ENCODE measurements at regions of chr6 and their contacts with region 1.

Region 1: DNA sequence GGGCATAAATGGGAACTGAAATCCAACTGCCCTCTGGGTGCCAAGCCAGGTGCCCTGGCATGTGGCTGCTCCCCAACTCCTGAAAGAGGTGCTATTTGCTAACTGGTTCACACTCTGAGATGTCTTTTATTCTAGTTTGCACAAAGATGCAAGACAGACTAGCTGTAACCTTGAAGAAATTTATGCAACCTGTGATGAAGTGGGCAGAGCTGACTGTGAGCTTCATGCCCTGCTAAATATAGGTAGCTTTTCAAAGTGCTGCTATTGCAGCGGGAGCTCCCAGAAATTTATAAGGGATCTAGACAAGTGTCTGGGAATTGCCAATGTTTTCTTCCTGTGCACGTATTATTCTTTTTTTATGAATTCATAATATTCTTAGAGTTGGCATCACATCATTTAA is 517.5 kb downstream of the RNF144B start:
- DNase-seq: no peak
- ATAC-seq: no peak

Region 2: GRCh38 chr6:17932330-17932852 is 972.3 kb before region 1 on chr6:
- intact Hi-C with region 1: no loop called
- DNase-seq: no peak
- ATAC-seq: peak; percentile 75

Region 3: DNA sequence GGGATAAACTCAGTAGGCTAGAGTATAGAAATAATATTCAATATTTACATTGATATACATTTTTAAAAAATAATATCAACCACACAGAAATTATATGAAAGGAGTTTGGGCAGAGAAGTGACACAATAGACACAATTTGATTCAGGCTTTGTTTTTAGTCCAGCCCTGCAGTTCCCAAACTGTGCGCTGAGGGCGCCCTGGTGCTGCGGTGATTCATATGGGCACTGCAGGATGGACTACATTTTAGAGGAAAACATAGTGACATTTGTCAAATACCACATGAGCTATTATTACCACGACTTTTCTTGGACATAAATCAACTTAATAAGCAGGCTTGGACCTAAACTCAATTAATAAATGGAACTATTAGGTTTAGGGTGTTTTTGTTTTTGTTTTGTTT is 568.2 kb after region 1 on chr6:
- intact Hi-C with region 1: no loop called
- DNase-seq: no peak
- ATAC-seq: no peak

Region 4: GRCh38 chr6:19968201-19968600 is 1063.5 kb after region 1 on chr6:
- intact Hi-C with region 1: loop called (anchors 5 kb)
- DNase-seq: no peak
- ATAC-seq: no peak

Measured in sciatic nerve (tissue), 2 donors.